ENCODE measurements at regions of chr1 and their contacts with region 1.

Region 1: GRCh38 chr1:246579818-246580217 is 13.6 kb downstream of the CNST start:
- DNase-seq: peak in 2 of 3 donors; percentile 61 to 75
- H3K4me3 ChIP-seq: peak overlapping the region in 4 of 7 experiments; percentile 7 to 44 (median 24)
- H3K27ac ChIP-seq: peak overlapping the region; percentile 90 to 93
- H3K4me1 ChIP-seq: peaks cover 43 to 96% (median 80%) of the 10 kb centered on the region in 4 experiments
- H3K27me3 ChIP-seq: no peaks in the 10 kb centered on the region

Region 2: GRCh38 chr1:246566128-246566812 is 13.5 kb before region 1 on chr1 and contains the starts of genes CNST and TFB2M:
- CTCF ChIA-PET with region 1: interaction called, 12 read pairs
- POLR2A ChIA-PET with region 1: interaction called, 19 read pairs
- DNase-seq: peak; percentile 98 to 99 (median 98)
- H3K4me3 ChIP-seq: peak within 1 kb of the TSS; percentile 89 to 100 (median 98)
- H3K27ac ChIP-seq: peak within 1 kb of the TSS; percentile 92 to 96
- H3K4me1 ChIP-seq: peaks cover 29 to 52% (median 43%) of the 10 kb centered on the region in 4 experiments
- H3K27me3 ChIP-seq: no peaks in the 10 kb centered on the region

Region 3: GRCh38 chr1:246591504-246591903 is 11.7 kb after region 1 on chr1:
- CTCF ChIA-PET with region 1: interaction called, 11 read pairs
- POLR2A ChIA-PET with region 1: interaction called, 3 read pairs
- DNase-seq: no peak
- H3K4me3 ChIP-seq: no peak overlapping the region
- H3K27ac ChIP-seq: no peak overlapping the region
- H3K4me1 ChIP-seq: peaks cover 0 to 9% (median 5%) of the 10 kb centered on the region in 4 experiments
- H3K27me3 ChIP-seq: no peaks in the 10 kb centered on the region

Region 4: DNA sequence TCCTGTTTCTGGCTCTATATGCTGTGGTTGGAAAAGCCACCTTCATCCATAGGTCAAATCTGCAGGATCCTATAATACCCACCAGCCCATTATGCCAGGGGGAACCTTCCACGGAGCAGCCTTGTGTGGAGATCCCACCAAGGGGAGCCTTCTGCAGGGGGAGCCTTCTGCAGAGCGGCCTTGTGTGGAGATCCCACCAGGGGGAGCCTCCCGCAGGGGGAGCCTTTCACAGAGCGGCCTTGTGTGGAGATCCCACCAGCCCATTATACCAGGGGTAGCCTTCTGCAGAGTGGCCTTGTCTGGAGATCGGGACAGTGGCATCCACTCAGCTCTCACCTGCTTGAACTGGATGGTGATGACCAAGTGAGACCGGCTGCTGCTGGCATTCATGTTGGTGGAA is 229.7 kb after region 1 on chr1:
- CTCF ChIA-PET with region 1: no interaction called
- POLR2A ChIA-PET with region 1: no interaction called
- DNase-seq: no peak
- H3K4me3 ChIP-seq: no peak overlapping the region
- H3K27ac ChIP-seq: no peak overlapping the region
- H3K4me1 ChIP-seq: no peaks in the 10 kb centered on the region
- H3K27me3 ChIP-seq: no peaks in the 10 kb centered on the region

Measured in common myeloid progenitor, CD34-positive (primary cell).